Activated CD4-positive, alpha-beta memory T cell treated with anti-CD3 and anti-CD28 coated beads, Interleukin-2, amount 10 ng/mL, durations not matched to agents 7 days and 5 days (primary cell): ENCODE measurements at regions of chr17 and their contacts with region 1.

Region 1: DNA sequence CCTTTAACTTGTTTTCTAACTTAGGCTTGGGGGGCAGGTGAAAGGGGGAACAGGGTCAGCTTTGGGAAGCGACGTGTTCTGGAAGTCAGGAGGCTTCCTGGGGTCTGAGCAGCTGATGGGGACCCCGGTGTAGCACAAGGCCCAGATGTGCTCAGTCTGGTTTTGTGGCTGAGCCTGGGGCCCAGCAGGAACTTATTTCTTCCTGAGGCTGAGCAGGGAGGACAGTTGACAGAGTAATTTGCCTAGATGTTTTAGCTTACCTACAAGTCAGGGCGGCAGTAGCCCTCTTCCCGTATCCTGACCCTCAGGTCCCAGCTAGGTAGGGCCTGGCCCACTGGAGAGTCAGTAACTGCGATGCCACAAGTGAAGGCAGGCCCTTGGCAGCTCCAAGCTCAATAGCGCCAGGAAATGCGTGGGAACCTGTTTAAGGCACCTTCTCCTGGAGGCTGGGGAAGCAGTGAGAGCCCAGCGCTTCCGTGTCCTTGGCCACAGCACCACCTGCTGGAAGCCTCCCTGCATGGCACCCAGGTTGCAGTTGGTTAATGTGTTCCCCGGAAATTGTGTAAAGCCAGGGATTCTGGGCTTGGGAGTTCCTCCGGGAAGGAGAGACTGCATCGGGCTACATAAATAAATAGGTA is 5.2 kb downstream of the CCR7 start:
- DNase-seq: peak; percentile 86
- H3K4me3 Mint-ChIP-seq: peak overlapping the region; percentile 74
- H3K27ac Mint-ChIP-seq: peak overlapping the region; percentile 91
- H3K4me1 Mint-ChIP-seq: peaks cover 77% of the 10 kb centered on the region
- H3K27me3 Mint-ChIP-seq: peaks cover 37% of the 10 kb centered on the region

Region 2: GRCh38 chr17:40362696-40363110 is 197.4 kb before region 1 on chr17:
- CTCF ChIA-PET with region 1: interaction called, 36 read pairs
- POLR2A ChIA-PET with region 1: interaction called, 11 read pairs
- DNase-seq: peak; percentile 90
- H3K4me3 Mint-ChIP-seq: peak overlapping the region; percentile 56
- H3K27ac Mint-ChIP-seq: no peak overlapping the region
- H3K4me1 Mint-ChIP-seq: peaks cover 21% of the 10 kb centered on the region
- H3K27me3 Mint-ChIP-seq: peaks cover 21% of the 10 kb centered on the region

Region 3: DNA sequence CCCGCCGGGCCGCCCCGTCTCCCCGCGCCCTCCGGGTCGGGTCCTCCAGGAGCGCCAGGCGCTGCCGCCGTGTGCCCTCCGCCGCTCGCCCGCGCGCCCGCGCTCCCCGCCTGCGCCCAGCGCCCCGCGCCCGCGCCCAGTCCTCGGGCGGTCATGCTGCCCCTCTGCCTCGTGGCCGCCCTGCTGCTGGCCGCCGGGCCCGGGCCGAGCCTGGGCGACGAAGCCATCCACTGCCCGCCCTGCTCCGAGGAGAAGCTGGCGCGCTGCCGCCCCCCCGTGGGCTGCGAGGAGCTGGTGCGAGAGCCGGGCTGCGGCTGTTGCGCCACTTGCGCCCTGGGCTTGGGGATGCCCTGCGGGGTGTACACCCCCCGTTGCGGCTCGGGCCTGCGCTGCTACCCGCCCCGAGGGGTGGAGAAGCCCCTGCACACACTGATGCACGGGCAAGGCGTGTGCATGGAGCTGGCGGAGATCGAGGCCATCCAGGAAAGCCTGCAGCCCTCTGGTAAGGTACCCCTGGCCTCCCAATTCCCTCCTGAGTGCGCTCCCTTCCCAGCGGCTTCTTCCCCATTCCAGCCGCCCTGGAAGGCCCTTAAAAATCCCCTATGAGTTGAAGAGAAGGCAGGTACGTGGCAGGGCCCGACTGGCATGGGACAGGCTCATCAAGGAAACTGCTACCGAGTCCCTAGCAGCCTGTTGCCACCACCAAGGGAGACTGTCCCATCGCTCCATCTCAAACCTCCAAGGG is 116.3 kb before region 1 on chr17:
- CTCF ChIA-PET with region 1: interaction called, 16 read pairs
- POLR2A ChIA-PET with region 1: interaction called, 11 read pairs
- DNase-seq: peak; percentile 72
- H3K4me3 Mint-ChIP-seq: peak overlapping the region; percentile 82
- H3K27ac Mint-ChIP-seq: peak overlapping the region; percentile 88
- H3K4me1 Mint-ChIP-seq: peaks cover 48% of the 10 kb centered on the region
- H3K27me3 Mint-ChIP-seq: peaks cover 31% of the 10 kb centered on the region

Region 4: DNA sequence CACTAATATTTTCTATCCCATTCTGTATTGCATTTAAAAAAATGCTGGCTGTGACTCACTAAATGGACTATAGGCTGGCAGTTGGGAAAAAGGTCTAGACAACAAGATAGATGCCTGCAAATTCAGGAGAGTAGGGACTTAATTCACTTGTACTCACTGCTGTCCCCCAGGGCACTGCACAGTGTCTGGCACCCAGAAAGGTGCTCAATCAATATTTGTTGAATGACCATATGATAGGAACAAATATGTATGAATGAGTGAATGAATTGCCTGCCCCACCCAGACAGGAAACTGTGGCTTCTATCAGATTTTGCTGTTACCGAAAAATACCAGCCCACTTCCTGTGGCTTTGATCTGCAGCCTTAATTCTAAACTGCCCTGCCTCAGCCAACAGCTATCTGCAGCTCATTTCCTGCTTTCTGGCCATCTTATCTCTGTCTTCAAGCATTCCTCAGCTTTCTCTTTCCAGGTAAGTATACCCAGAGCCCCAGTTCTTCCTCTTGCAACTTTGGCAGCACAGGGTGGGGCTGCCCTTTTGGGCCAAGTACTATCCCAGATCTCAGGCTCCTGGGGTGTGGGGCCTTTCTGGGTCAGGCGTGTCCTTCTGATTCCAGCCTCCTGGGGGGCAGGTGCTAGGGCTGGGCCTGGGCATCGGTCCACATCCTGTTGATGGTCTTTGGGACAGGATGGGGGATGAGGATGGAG is 43.3 kb before region 1 on chr17:
- CTCF ChIA-PET with region 1: interaction called, 22 read pairs
- POLR2A ChIA-PET with region 1: interaction called, 20 read pairs
- DNase-seq: peak; percentile 87
- H3K4me3 Mint-ChIP-seq: peak overlapping the region; percentile 80
- H3K27ac Mint-ChIP-seq: peak overlapping the region; percentile 92
- H3K4me1 Mint-ChIP-seq: peaks cover 80% of the 10 kb centered on the region
- H3K27me3 Mint-ChIP-seq: peaks cover 2% of the 10 kb centered on the region

Region 5: GRCh38 chr17:40582328-40582901 is 22.3 kb after region 1 on chr17:
- CTCF ChIA-PET with region 1: interaction called, 6 read pairs
- POLR2A ChIA-PET with region 1: interaction called, 34 read pairs
- DNase-seq: peak; percentile 78
- H3K4me3 Mint-ChIP-seq: peak overlapping the region; percentile 48
- H3K27ac Mint-ChIP-seq: peak overlapping the region; percentile 76
- H3K4me1 Mint-ChIP-seq: peaks cover 57% of the 10 kb centered on the region
- H3K27me3 Mint-ChIP-seq: peaks cover 9% of the 10 kb centered on the region

Region 6: GRCh38 chr17:40615295-40615988 is 55.4 kb after region 1 on chr17:
- CTCF ChIA-PET with region 1: interaction called, 54 read pairs
- POLR2A ChIA-PET with region 1: interaction called, 130 read pairs
- DNase-seq: no peak
- H3K4me3 Mint-ChIP-seq: no peak overlapping the region
- H3K27ac Mint-ChIP-seq: peak overlapping the region; percentile 2
- H3K4me1 Mint-ChIP-seq: peaks cover 59% of the 10 kb centered on the region
- H3K27me3 Mint-ChIP-seq: peaks cover 3% of the 10 kb centered on the region

Region 7: DNA sequence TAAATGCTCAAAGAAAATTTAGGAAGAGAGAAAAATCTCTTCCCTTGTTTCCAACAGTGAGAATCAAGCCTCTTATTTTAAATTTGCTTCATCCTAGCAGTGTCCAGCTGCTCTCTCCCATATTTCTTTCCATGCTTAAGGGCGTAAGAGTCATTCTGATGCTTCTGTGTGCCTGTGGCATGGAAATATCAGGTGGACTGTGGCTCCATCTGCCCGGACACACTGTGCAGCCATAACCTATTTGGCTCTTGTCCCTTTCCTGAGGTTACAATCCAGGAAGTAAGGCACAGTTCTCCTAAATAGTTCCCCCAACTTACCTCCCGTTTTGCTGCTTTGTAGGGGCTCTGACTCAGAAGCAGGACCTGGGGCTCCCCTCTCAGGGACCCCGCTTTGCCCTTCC is 111.2 kb after region 1 on chr17:
- CTCF ChIA-PET with region 1: no interaction called
- POLR2A ChIA-PET with region 1: no interaction called
- DNase-seq: no peak
- H3K4me3 Mint-ChIP-seq: no peak overlapping the region
- H3K27ac Mint-ChIP-seq: no peak overlapping the region
- H3K4me1 Mint-ChIP-seq: no peaks in the 10 kb centered on the region
- H3K27me3 Mint-ChIP-seq: peaks cover 40% of the 10 kb centered on the region

Region 8: DNA sequence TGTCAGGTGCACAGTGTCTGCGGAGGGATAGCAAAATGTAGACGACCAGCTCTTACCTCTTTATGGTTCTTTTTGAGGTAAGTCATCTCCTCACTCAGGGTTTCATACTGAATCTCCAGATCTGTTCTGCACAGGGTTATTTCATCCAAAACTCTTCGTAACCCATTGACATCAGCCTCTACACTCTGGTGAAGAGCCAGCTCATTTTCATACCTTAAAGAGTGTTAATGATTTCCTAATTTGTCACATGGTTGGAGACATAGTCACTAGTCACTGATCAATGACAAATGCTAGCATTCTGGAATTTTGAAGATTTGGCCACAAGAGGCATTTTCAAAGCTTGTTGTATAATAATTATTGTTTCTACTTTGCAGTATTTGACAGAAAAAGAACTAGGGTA is 193.7 kb after region 1 on chr17:
- CTCF ChIA-PET with region 1: no interaction called
- POLR2A ChIA-PET with region 1: no interaction called
- DNase-seq: no peak
- H3K4me3 Mint-ChIP-seq: no peak overlapping the region
- H3K27ac Mint-ChIP-seq: no peak overlapping the region
- H3K4me1 Mint-ChIP-seq: no peaks in the 10 kb centered on the region
- H3K27me3 Mint-ChIP-seq: peaks cover 31% of the 10 kb centered on the region